ENCODE measurements at regions of chr1 and their contacts with region 1.

Region 1: GRCh38 chr1:181424786-181425403 is 58.4 kb upstream of the CACNA1E start:
- DNase-seq: peak; percentile 9 to 34
- ATAC-seq: peak; percentile 66 to 74
- H3K4me3 ChIP-seq: no peak overlapping the region
- H3K27ac ChIP-seq: no peak overlapping the region
- H3K4me1 ChIP-seq: no peaks in the 10 kb centered on the region
- H3K27me3 ChIP-seq: peaks cover 0 to 8% (median 0%) of the 10 kb centered on the region in 3 donors
- CTCF ChIP-seq: peak; percentile 81 to 90 (median 89)
- POLR2A ChIP-seq: no peak

Region 2: GRCh38 chr1:181057079-181057478 is 367.8 kb before region 1 on chr1:
- in situ Hi-C with region 1: no loop called
- intact Hi-C with region 1: no loop called
- DNase-seq: no peak
- ATAC-seq: no peak
- H3K4me3 ChIP-seq: no peak overlapping the region
- H3K27ac ChIP-seq: peak overlapping the region; percentile 53 to 100 (median 64)
- H3K4me1 ChIP-seq: peaks cover 28 to 37% of the 10 kb centered on the region in 2 donors
- H3K27me3 ChIP-seq: no peaks in the 10 kb centered on the region
- CTCF ChIP-seq: no peak
- POLR2A ChIP-seq: no peak

Region 3: DNA sequence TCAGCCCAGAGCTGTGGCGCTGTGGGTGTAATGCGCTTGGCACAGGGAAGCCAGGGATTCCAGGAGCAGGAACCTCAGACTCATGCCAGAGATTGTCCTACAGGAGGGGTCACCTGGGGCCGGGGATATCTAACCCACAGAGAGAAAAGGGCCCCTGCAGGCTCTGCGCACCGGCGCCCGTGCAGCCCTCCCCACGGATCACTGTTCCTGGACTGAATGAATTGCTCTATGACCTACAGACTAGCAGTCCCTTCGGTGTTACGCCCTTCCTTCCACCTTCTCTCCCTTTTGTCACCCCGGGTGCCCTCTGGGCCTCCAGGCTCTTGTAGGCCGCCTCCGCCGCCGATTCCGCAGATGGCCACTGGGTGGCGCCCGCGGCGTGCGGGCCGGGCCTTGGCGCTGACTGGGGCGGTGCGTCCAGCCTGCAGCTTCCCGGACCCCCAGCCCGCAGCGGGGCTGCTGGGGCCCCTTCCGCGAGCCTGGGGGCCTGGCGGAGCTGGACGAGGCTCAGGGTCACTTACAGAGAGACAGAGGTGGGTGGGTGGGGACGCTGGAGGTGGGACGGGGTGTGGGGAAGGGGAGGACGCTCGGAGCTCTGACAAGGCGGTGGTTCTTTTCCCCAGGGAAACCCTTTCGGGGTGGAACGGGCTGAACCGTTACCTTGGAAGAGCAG is 235.1 kb before region 1 on chr1:
- in situ Hi-C with region 1: loop called (anchors 5 to 10 kb)
- intact Hi-C with region 1: loop called (anchors 1 kb)
- DNase-seq: peak in 1 of 2 donors; percentile 47
- ATAC-seq: peak; percentile 84 to 92
- H3K4me3 ChIP-seq: peak overlapping the region; percentile 27 to 40 (median 36)
- H3K27ac ChIP-seq: no peak overlapping the region
- H3K4me1 ChIP-seq: peaks cover 5 to 7% of the 10 kb centered on the region in 2 donors
- H3K27me3 ChIP-seq: no peaks in the 10 kb centered on the region
- CTCF ChIP-seq: peak; percentile 81 to 98 (median 90)
- POLR2A ChIP-seq: no peak

Measured in gastrocnemius medialis (tissue), 4 donors.